Common myeloid progenitor, CD34-positive (primary cell): ENCODE measurements at regions of chr13 and their contacts with region 1.

Region 1: DNA sequence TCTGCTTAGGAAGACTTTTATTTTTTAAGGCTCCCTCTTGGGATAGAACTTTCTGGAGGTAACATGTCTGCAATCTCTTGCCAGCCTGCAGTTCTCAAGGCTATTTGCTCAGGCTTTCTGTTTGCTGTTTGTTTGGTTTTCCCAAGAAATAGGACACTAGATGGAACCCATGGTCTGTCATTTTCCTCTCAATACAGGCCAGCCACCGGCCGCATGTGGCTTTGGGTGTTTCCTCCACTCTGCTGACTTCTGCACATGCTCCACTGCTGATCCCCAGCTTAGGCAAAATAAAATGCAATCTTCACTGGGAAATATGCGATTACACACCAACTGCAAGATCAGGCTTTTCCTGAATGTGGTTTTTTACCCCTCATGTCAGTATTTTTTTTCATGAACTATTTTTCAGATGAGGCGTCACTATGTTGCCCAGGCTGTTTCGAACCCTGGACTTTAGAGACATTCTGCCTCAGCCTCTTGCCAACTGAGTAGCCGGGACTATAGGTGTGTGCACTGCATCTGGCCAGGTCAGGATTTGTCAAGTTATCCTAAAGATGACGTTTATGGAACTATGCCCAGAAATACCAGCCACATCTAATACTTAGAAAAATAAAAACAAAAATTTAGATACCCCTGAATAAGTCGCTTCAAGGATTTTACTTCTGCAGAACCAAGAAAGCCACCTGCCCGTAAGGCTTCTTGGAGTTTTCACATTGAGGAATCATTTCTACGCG is 94.3 kb upstream of the PABPC3 start:
- DNase-seq: peak in 2 of 3 donors; percentile 17 to 18
- H3K4me3 ChIP-seq: no peak overlapping the region
- H3K27ac ChIP-seq: no peak overlapping the region
- H3K4me1 ChIP-seq: peaks cover 0 to 5% (median 2%) of the 10 kb centered on the region in 4 experiments
- H3K27me3 ChIP-seq: peaks cover 0 to 34% (median 14%) of the 10 kb centered on the region in 5 experiments

Region 2: DNA sequence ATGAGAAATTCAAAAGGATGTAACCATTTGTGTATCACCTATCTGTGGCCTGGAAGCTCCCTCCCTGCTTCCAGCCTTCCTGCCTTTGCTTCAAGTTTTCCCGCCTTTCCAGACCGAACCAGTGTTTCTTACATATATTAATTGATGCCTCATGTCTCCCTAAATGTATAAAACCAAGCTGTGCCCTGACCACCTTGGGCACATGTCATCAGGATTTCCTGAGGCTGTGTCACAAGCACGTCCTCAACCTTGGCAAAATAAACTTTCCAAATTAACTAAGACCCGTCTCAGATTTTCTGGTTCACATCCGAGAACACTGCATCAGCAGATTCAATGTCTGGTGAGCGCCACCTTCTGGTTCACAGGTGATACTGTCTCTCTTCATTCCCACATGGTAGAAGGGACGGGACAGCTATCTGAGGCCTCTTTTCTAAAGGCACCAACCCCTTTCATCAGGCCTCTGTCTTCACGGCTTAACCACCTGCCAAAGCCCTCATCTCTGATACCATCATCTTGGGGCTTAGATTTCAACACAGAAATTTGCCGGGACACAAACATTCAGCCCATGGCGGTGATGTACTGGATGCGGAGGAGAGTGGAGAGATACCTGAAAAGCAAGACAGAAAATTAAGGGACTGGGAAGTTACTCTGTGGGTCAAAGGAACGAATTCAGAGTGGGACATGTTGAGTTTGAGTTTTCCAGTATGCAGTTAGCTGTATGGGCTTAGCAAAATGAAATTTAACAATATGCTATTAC is 35.6 kb after region 1 on chr13:
- CTCF ChIA-PET with region 1: interaction called, 15 read pairs
- POLR2A ChIA-PET with region 1: no interaction called
- DNase-seq: peak; percentile 73 to 87 (median 83)
- H3K4me3 ChIP-seq: no peak overlapping the region
- H3K27ac ChIP-seq: no peak overlapping the region
- H3K4me1 ChIP-seq: no peaks in the 10 kb centered on the region
- H3K27me3 ChIP-seq: peaks cover 0 to 38% (median 20%) of the 10 kb centered on the region in 5 experiments

Region 3: DNA sequence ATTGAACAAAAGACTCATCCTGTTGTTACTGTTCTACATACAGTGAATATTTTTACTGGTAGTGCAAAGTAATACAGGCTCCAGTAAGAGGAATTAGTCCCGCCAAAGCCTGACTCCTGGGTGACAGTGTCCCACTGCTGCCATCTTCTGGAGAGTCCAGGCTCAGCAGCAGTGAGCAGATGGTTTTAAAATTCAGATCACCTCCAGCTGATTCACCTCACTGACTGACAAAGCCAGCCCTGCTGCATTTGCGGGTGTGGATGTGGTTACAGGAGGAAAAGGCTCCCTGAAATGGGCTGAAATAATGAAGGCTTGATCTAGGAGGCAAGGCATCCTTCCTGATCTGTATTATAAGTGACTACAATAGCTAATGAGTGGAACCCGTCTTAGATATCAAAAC is 112.6 kb after region 1 on chr13:
- CTCF ChIA-PET with region 1: interaction called, 36 read pairs
- POLR2A ChIA-PET with region 1: no interaction called
- DNase-seq: peak; percentile 82 to 93 (median 88)
- H3K4me3 ChIP-seq: no peak overlapping the region
- H3K27ac ChIP-seq: no peak overlapping the region
- H3K4me1 ChIP-seq: peaks cover 0 to 2% (median under 1%) of the 10 kb centered on the region in 4 experiments
- H3K27me3 ChIP-seq: peaks cover 0 to 29% (median 7%) of the 10 kb centered on the region in 5 experiments

Region 4: GRCh38 chr13:25147638-25148401 is 146.2 kb after region 1 on chr13:
- CTCF ChIA-PET with region 1: no interaction called
- POLR2A ChIA-PET with region 1: no interaction called
- DNase-seq: no peak
- H3K4me3 ChIP-seq: no peak overlapping the region
- H3K27ac ChIP-seq: no peak overlapping the region
- H3K4me1 ChIP-seq: no peaks in the 10 kb centered on the region
- H3K27me3 ChIP-seq: peaks cover 0 to 35% (median 3%) of the 10 kb centered on the region in 5 experiments

Region 5: GRCh38 chr13:25310891-25311290 is 309.2 kb after region 1 on chr13:
- CTCF ChIA-PET with region 1: no interaction called
- POLR2A ChIA-PET with region 1: no interaction called
- DNase-seq: no peak
- H3K4me3 ChIP-seq: no peak overlapping the region
- H3K27ac ChIP-seq: no peak overlapping the region
- H3K4me1 ChIP-seq: no peaks in the 10 kb centered on the region
- H3K27me3 ChIP-seq: no peaks in the 10 kb centered on the region